ENCODE measurements at regions of chr17 and their contacts with region 1.

Region 1: DNA sequence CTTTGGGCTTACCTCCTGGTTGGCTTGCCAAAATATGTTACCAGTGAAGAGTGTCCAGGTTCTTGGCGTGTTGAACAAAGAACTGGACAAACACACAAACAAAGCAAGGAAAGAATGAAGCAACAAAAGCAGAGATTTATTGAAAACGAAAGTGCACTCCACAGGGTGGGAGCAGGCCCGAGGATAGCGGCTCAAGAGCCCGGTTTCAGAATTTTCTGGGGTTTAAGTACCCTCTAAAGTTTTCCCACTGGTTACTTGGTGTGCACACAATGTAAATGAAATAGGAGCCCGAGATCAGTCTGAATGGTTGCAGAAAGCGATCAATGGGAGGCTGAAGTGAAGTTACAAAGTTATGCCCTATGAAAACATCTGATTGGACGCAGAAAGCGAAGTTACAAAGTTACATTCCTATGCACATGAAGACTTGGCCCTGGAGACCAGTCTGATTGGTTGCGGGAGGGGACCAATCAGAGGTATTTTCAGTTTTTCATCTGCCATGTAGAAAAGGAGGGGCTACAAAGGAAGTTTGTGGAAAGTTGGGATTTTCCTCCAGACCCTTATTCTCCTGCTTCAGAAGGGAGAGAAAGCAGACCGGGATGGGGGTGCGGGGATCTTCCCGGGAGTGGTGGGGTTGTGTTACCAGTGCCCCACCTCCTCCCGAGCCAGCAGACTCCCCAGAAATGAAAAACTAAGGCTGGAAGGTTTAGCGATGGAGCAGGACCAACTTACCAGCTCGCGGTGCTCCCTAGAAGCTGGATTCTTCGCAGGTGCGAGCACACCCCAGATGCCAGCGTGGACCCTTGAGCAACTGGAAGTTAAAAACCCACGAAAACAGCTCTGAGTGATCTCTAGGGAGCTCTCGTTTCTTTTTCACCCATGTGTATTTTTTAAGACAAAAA is at the start of gene SLFN12:
- DNase-seq: no peak
- ATAC-seq: peak; percentile 90
- total RNA-seq, gene SLFN12: 3.0 TPM

Region 2: GRCh38 chr17:35373534-35373983 is 58.9 kb before region 1 on chr17 and contains the start of gene SLFN11:
- intact Hi-C with region 1: loop called (anchors 2 kb)
- DNase-seq: peak; percentile 92
- ATAC-seq: peak; percentile 95
- total RNA-seq, gene SLFN11: 18.1 TPM

Region 3: GRCh38 chr17:35416659-35417058 is 15.8 kb before region 1 on chr17:
- intact Hi-C with region 1: no loop called
- DNase-seq: no peak
- ATAC-seq: no peak

Region 4: GRCh38 chr17:35486920-35487732 is 54.7 kb after region 1 on chr17:
- intact Hi-C with region 1: loop called (anchors 5 kb)
- DNase-seq: peak; percentile 84
- ATAC-seq: peak; percentile 66

Measured in Right ventricle myocardium inferior (tissue), 1 donor.